BJ (cell line): ENCODE measurements at regions of chr12 and their contacts with region 1.

Region 1: DNA sequence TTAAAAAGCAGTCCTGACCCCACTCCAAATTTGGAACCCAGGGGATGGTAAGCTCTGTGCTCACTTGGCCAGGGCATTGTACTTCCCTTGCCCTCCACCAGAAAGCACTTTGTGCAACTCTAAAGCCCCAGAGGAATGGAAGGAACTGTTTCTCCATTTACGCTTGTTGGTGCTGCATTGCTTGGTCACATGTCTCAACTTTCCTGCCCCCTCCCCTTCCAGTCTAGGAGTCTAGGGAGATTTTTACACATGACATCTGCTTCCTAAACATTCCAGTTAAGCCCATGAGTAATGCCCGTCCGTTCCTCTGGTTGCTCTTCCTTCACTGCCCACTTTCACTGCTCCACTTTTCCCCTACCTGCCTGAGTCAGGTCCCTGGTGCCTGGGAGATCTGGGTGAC is 92.6 kb upstream of the MAP1LC3B2 start:
- DNase-seq: no peak
- H3K4me3 ChIP-seq: no peak overlapping the region
- H3K27me3 ChIP-seq: no peaks in the 10 kb centered on the region
- CTCF ChIP-seq: no peak

Region 2: GRCh38 chr12:116441292-116441691 is 25.2 kb before region 1 on chr12:
- CTCF ChIA-PET with region 1: no interaction called
- POLR2A ChIA-PET with region 1: no interaction called
- DNase-seq: no peak
- H3K4me3 ChIP-seq: no peak overlapping the region
- H3K27me3 ChIP-seq: no peaks in the 10 kb centered on the region
- CTCF ChIP-seq: no peak

Region 3: GRCh38 chr12:116480210-116480810 is 13.8 kb after region 1 on chr12:
- CTCF ChIA-PET with region 1: no interaction called
- POLR2A ChIA-PET with region 1: interaction called, 13 read pairs
- DNase-seq: no peak
- H3K4me3 ChIP-seq: no peak overlapping the region
- H3K27me3 ChIP-seq: peaks cover 2% of the 10 kb centered on the region
- CTCF ChIP-seq: no peak